Transverse colon (tissue), 4 donors: ENCODE measurements at regions of chr22 and their contacts with region 1.

Region 1: DNA sequence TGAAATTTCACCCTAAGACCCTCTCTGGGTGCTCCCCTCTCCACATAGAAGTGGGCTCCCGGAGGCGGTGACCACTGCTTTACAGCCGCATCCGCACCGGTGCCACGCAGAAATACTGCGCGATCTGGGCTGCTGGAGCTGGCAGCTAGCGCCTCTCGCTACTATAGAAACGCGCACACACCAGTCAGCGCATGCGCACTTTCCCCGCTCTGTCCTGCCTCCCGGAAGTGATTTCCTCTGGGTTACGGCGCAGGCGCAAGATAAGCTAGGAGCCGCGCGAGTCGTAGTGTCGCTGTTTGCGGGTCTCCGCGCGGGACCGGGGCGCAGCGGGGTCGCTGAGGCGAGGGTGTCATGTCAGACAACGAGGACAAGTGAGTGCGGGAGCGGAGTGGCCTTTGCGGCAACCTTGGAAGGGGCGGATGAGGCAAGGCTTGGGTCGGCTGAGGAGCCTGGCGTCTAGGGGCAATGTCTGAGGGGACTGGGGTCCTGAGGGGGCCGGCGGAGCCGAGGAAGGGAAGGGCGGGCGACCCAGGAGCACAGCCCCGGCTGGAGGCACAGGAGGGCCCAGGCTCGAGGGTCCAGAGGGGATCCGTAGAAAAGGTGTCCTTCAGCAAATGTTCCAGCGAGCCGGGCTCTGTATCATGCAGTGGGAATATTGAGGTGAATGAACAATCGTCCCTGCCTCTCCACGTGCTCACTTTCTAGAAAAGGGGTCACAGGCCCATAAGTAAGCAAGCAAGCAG is at the starts of genes C22orf23 and POLR2F:
- DNase-seq: peak; percentile 98
- H3K4me3 ChIP-seq: peak within 1 kb of the TSS; percentile 84 to 95 (median 92)
- H3K27ac ChIP-seq: peak within 1 kb of the TSS; percentile 72 to 88 (median 84)
- H3K4me1 ChIP-seq: peaks cover 18 to 22% (median 20%) of the 10 kb centered on the region in 4 donors
- H3K27me3 ChIP-seq: peaks cover 10% of the 10 kb centered on the region
- CTCF ChIP-seq: no peak
- EP300 ChIP-seq: no peak
- POLR2A ChIP-seq: peak; percentile 74
- total RNA-seq, gene C22orf23: not detected
- total RNA-seq, gene POLR2F: 7.6 to 65.5 (median 32.6) TPM

Region 2: GRCh38 chr22:37777122-37777687 is 176.4 kb before region 1 on chr22:
- in situ Hi-C with region 1: no loop called
- intact Hi-C with region 1: no loop called
- DNase-seq: peak; percentile 74
- H3K4me3 ChIP-seq: no peak overlapping the region
- H3K27ac ChIP-seq: peak overlapping the region; percentile 50 to 68 (median 58)
- H3K4me1 ChIP-seq: peaks cover 8 to 15% (median 11%) of the 10 kb centered on the region in 4 donors
- H3K27me3 ChIP-seq: no peaks in the 10 kb centered on the region
- CTCF ChIP-seq: no peak
- EP300 ChIP-seq: no peak
- POLR2A ChIP-seq: peak; percentile 5

Region 3: GRCh38 chr22:37807410-37808293 is 146.0 kb before region 1 on chr22 and contains the start of gene GCAT:
- in situ Hi-C with region 1: loop called in 1 of 4 experiments (anchors 25 kb)
- intact Hi-C with region 1: no loop called
- DNase-seq: peak; percentile 96
- H3K4me3 ChIP-seq: peak within 1 kb of the TSS; percentile 53 to 65 (median 58)
- H3K27ac ChIP-seq: peak within 1 kb of the TSS; percentile 93 to 96 (median 94)
- H3K4me1 ChIP-seq: peaks cover 5 to 55% (median 40%) of the 10 kb centered on the region in 4 donors
- H3K27me3 ChIP-seq: no peaks in the 10 kb centered on the region
- CTCF ChIP-seq: no peak
- EP300 ChIP-seq: no peak
- POLR2A ChIP-seq: peak; percentile 77
- total RNA-seq, gene GCAT: 6.4 to 10.1 (median 7.7) TPM

Region 4: GRCh38 chr22:37849089-37849751 is 104.4 kb before region 1 on chr22 and contains the start of gene EIF3L:
- in situ Hi-C with region 1: no loop called
- intact Hi-C with region 1: loop called (anchors 5 kb)
- DNase-seq: peak; percentile 93
- H3K4me3 ChIP-seq: peak within 1 kb of the TSS; percentile 64 to 90 (median 70)
- H3K27ac ChIP-seq: peak within 1 kb of the TSS; percentile 86 to 93 (median 92)
- H3K4me1 ChIP-seq: peaks cover 7 to 23% (median 9%) of the 10 kb centered on the region in 4 donors
- H3K27me3 ChIP-seq: no peaks in the 10 kb centered on the region
- CTCF ChIP-seq: peak in 1 of 5 experiments; percentile 10
- EP300 ChIP-seq: no peak
- POLR2A ChIP-seq: peak; percentile 93
- total RNA-seq, gene EIF3L: 89.4 to 292 (median 217) TPM

Region 5: DNA sequence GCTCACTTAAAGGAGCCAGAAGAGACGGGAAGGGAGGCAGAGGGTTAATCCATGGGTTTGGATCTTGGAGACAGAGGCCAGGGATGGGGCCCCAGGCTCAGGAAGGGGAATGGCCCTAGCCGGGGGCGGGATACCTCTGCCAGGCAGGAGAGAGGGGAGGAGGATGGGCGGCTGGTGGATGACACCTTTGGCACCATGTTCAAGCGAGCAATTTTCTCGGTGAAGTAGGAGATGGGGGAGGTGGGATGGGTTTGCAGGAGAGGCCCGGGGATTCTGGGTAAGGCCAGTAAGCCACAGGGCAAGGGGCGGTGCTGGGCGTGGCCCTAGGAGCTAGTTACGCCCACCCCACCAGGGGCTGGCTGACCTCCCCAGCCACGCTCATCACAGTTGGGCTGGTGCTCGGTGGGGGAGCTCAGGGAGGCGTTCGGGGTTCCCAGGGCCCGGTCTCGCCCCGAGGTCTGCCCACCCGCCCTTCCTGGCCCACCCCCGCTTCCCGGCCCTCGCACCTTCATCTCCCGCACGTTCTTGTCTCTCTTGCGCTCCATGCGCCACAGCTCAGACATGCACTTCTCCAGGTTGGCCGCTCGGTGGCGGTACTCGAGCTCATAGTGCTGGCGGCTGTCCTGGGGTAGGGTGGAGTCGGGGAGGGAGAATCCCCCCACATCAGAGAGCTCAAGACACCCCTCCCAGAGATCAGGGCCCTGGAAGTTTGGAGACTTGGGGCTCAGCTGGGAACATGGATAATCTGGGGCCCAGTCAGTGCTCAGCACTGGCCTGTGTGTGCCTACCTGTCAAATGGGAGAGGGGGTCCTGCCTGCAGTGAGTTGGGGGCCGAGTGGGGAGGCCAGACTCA is 144.2 kb after region 1 on chr22:
- in situ Hi-C with region 1: no loop called
- intact Hi-C with region 1: no loop called
- DNase-seq: no peak
- H3K4me3 ChIP-seq: no peak overlapping the region
- H3K27ac ChIP-seq: no peak overlapping the region
- H3K4me1 ChIP-seq: peaks cover 0 to 13% (median 5%) of the 10 kb centered on the region in 4 donors
- H3K27me3 ChIP-seq: no peaks in the 10 kb centered on the region
- CTCF ChIP-seq: no peak
- EP300 ChIP-seq: no peak
- POLR2A ChIP-seq: no peak